ENCODE measurements at regions of chr15 and their contacts with region 1.

Region 1: DNA sequence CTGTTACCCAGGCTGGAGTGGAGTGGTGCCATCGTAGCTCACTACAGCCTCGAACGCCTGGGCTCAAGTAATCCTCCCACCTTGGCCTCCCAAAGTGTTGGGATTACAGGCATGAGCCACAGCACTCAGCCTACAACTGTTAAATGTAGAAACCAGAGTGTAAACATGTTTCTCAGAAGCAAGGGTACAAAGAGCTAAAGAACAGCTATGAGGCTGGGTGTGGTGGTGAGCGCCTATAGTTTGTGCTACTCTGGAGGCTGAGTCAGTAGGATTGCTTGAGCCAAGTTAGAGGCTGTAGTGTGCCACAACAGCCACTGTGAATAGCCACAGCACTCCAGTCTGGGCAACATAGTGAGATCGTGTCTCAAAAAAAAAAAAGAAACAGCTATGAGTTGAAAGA is 4.8 kb upstream of the MINDY2 start:
- DNase-seq: no peak
- H3K4me3 ChIP-seq: no peak overlapping the region
- CTCF ChIP-seq: no peak
- POLR2A ChIP-seq: no peak

Region 2: GRCh38 chr15:58115692-58116091 is 650.6 kb before region 1 on chr15:
- intact Hi-C with region 1: loop called (anchors 5 kb)
- DNase-seq: no peak
- H3K4me3 ChIP-seq: no peak overlapping the region
- CTCF ChIP-seq: no peak
- POLR2A ChIP-seq: no peak

Region 3: DNA sequence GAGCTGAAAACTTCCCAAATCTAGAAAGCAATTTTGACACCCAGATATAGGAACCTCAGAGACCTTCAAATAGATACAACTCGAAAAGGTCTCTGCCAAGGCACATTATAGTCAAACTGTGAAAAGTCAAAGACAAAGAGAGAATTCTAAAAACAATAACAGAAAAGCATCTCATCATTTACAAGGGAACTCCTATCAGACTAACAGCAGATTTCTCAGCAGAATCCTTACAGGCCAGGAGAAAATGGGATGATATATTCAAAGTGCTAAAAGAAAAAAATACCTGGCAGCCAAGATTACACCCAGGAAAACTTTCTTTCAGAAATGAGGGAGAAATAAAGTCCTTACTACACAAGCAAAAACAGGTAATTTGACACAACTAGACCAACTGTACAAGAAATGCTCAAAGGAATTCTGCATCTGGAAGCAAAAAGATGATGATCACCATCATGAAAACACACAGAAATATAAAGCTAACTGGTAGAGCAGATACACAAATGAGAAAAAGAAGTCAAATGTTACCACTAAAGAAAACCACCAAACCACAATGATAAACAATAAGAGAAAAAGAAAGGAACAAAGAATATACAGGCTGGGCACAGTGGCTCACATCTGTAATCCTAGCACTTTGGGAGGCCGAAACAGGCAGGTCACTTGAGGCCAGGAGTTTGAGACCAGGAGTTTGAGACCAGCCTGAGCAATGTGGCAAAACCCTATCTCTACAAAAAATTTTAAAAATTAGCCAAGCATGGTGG is 67.2 kb before region 1 on chr15:
- intact Hi-C with region 1: no loop called
- DNase-seq: no peak
- H3K4me3 ChIP-seq: no peak overlapping the region
- CTCF ChIP-seq: no peak
- POLR2A ChIP-seq: no peak